ENCODE measurements at regions of chr12 and their contacts with region 1.

Region 1: DNA sequence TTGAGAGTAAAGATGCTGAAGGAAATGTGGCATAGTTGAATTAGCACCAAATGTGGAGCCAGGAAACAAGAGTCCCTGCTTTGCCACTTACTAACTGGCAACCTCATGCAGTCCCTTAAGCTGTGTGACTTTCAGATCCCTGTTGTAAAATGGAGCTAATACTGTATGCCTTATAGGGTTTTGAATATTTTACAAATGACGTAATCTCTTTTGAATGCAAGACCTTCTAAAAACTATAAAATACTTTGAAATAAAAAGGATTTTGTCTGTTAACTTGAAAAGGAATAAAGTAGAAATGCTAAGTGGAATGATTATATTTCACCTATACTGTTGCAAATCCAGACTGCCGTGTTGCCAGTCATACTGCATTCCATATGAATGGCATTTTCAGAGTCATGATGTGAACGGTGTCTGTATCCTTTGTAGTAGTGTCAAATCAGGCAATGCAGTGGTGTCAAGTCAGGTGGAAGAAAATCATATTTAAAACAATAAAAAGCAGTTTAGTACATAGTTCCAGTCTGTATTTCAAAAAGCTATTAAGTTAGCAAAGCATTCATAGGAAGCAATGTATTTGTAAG is 21.3 kb downstream of the KCNA5 start:
- DNase-seq: no peak
- H3K4me3 ChIP-seq: no peak overlapping the region
- H3K27ac ChIP-seq: peak overlapping the region; percentile 75 to 76
- H3K4me1 ChIP-seq: peaks cover under 1 to 37% of the 10 kb centered on the region in 2 donors
- H3K27me3 ChIP-seq: no peaks in the 10 kb centered on the region
- CTCF ChIP-seq: no peak

Region 2: DNA sequence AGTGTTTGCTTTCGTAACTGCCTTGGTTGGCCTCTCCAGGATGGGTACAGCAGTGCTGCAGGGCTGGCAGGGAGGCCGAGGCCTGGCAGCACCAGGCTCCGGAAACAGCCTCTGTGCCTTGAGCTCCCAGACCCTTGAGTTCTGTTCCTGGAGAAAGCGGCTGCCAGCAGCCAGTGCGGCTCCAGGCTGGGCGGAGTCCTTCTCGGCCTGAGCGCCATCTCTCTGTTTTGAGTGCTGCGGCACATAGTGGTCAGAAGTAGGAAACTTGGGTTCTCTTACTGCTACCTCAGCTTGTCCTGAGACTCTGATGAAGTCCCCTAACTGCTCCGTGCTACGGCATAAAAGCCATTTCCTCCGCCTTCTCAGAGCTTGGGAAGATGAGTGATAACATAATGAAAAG is 89.4 kb before region 1 on chr12:
- intact Hi-C with region 1: no loop called
- DNase-seq: no peak
- H3K4me3 ChIP-seq: no peak overlapping the region
- H3K27ac ChIP-seq: peak overlapping the region in 1 of 2 donors; percentile 16
- H3K4me1 ChIP-seq: no peaks in the 10 kb centered on the region
- H3K27me3 ChIP-seq: no peaks in the 10 kb centered on the region
- CTCF ChIP-seq: peak in 1 of 3 experiments; percentile 32

Region 3: DNA sequence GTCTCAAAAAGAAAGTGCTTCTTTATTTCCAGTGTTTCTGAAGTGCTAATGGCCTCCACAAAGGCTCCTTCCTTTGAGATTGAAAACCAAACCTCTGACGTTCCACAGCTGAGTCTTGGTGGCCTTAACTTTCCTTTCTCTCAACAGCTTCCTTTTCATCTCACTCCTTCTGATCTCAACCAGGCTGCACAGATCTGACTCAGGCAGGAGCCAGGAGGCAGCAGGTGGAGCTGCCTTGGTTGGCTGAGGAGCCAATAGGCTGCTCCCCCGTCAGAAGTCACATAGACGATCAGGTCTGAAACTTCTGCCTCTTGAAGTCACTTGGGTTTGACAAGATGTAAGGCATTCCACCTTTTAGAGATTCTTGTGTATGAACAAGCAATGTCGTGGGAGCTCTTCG is 30.4 kb before region 1 on chr12:
- intact Hi-C with region 1: no loop called
- DNase-seq: no peak
- H3K4me3 ChIP-seq: no peak overlapping the region
- H3K27ac ChIP-seq: peak overlapping the region; percentile 72 to 81
- H3K4me1 ChIP-seq: peaks cover 10 to 18% of the 10 kb centered on the region in 2 donors
- H3K27me3 ChIP-seq: no peaks in the 10 kb centered on the region
- CTCF ChIP-seq: no peak

Region 4: DNA sequence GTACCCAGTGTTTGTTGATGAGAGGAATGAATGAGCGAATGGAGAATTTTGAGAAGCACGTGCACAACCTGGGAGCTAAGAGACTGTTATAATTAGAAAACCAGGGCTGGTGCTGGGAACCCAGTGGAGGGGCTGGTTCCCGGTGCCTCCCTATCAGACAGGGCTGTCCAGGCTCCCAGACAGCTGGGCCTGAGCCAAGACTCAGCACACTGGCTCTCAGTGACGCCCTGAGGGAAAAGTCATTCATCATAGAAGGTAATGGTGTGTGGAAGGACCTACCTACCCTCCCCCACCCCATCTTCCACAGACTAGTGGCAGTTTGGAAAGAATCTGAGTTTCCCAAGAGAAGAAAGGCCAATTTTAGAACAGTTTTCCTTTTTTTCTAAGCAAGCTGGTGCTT is 13.4 kb after region 1 on chr12:
- intact Hi-C with region 1: loop called (anchors 2 kb)
- DNase-seq: peak; percentile 80 to 95
- H3K4me3 ChIP-seq: no peak overlapping the region
- H3K27ac ChIP-seq: peak overlapping the region; percentile 85
- H3K4me1 ChIP-seq: peaks cover 19 to 48% of the 10 kb centered on the region in 2 donors
- H3K27me3 ChIP-seq: no peaks in the 10 kb centered on the region
- CTCF ChIP-seq: no peak